ENCODE measurements at regions of chr16 and their contacts with region 1.

Region 1: GRCh38 chr16:67773569-67774456 is 32.5 kb downstream of the RANBP10 start:
- DNase-seq: no peak

Region 2: DNA sequence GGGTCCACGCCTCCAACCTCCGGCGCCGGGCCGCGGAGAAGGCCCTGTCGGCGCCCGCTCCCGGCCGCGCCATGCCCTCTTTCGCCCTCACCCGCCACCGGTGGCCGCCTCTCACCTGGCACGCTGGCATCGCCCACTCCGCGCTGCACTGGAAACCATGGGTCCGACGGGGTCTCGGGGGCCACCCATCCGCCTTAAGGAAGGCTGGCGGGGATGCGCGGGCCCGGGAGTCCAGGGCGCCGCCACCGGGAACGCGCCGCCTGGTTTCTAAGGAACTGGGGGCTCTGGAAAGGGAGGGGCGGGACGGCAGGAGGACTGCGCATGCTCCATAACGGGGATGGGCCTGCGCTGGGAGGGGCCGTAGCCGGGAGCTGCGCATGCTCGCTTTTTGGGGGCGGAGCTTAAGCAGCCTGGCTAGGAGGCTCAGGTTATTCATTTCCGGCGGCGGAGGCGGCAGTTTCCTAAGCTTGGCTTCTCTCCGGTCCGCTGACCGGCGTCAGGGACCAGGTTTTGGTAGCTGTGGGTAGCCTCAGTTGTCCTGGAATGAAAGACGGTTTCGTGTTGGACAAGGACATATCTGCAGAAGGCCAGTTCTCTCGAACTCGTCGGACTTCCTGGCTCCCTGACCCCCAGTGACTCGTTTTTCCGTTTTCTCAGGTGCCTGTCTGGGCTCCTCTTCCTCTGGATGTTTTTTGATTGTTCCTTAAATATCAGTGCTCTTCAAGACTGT is 54.6 kb before region 1 on chr16 and contains the start of gene GFOD2:
- intact Hi-C with region 1: no loop called
- DNase-seq: peak; percentile 99
- total RNA-seq, gene GFOD2: 14.2 to 14.5 TPM

Region 3: GRCh38 chr16:67760956-67761230 is 12.9 kb before region 1 on chr16:
- intact Hi-C with region 1: loop called in 1 of 2 experiments (anchors 1 kb)
- DNase-seq: no peak

Region 4: GRCh38 chr16:67822511-67822910 is 48.7 kb after region 1 on chr16:
- intact Hi-C with region 1: no loop called
- DNase-seq: no peak

Region 5: GRCh38 chr16:67833418-67834241 is 59.8 kb after region 1 on chr16:
- intact Hi-C with region 1: no loop called
- DNase-seq: peak; percentile 98